Common myeloid progenitor, CD34-positive (primary cell): ENCODE measurements at regions of chr3 and their contacts with region 1.

Region 1: GRCh38 chr3:49966230-49966942 is 26.4 kb downstream of the RBM6 start:
- DNase-seq: no peak
- H3K4me3 ChIP-seq: no peak overlapping the region
- H3K27ac ChIP-seq: no peak overlapping the region
- H3K4me1 ChIP-seq: no peaks in the 10 kb centered on the region
- H3K27me3 ChIP-seq: no peaks in the 10 kb centered on the region

Region 2: GRCh38 chr3:49952924-49953323 is 13.5 kb before region 1 on chr3:
- CTCF ChIA-PET with region 1: interaction called, 6 read pairs
- POLR2A ChIA-PET with region 1: interaction called, 12 read pairs
- DNase-seq: no peak
- H3K4me3 ChIP-seq: no peak overlapping the region
- H3K27ac ChIP-seq: no peak overlapping the region
- H3K4me1 ChIP-seq: peaks cover 0 to 6% (median 2%) of the 10 kb centered on the region in 4 experiments
- H3K27me3 ChIP-seq: no peaks in the 10 kb centered on the region

Region 3: GRCh38 chr3:49998326-49998725 is 31.9 kb after region 1 on chr3:
- CTCF ChIA-PET with region 1: no interaction called
- POLR2A ChIA-PET with region 1: no interaction called
- DNase-seq: no peak
- H3K4me3 ChIP-seq: no peak overlapping the region
- H3K27ac ChIP-seq: no peak overlapping the region
- H3K4me1 ChIP-seq: no peaks in the 10 kb centered on the region
- H3K27me3 ChIP-seq: no peaks in the 10 kb centered on the region